Panc1 (cell line): ENCODE measurements at regions of chr3 and their contacts with region 1.

Region 1: GRCh38 chr3:112005091-112005672 is 6.5 kb downstream of the TAGLN3 start:
- DNase-seq: no peak
- ATAC-seq: no peak
- H3K4me3 ChIP-seq: no peak overlapping the region
- H3K27ac ChIP-seq: no peak overlapping the region
- H3K4me1 ChIP-seq: no peaks in the 10 kb centered on the region
- H3K27me3 ChIP-seq: no peaks in the 10 kb centered on the region
- CTCF ChIP-seq: no peak

Region 2: GRCh38 chr3:112074721-112075497 is 69.7 kb after region 1 on chr3:
- CTCF ChIA-PET with region 1: interaction called, 11 read pairs
- POLR2A ChIA-PET with region 1: no interaction called
- in situ Hi-C with region 1: no loop called
- intact Hi-C with region 1: no loop called
- DNase-seq: no peak
- ATAC-seq: peak; percentile 94
- H3K4me3 ChIP-seq: no peak overlapping the region
- H3K27ac ChIP-seq: no peak overlapping the region
- H3K4me1 ChIP-seq: 0 out of 2 replicates have a peak, but pooled peaks cover 3% of the 10 kb centered on the region
- H3K27me3 ChIP-seq: no peaks in the 10 kb centered on the region
- CTCF ChIP-seq: no peak